Posterior cingulate gyrus (tissue), 11 donors: ENCODE measurements at regions of chr13 and their contacts with region 1.

Region 1: GRCh38 chr13:40992678-40993518 is 26.2 kb downstream of the ELF1 start:
- DNase-seq: no peak

Region 2: GRCh38 chr13:40777166-40777808 is 215.6 kb before region 1 on chr13:
- intact Hi-C with region 1: loop called (anchors 5 kb)
- DNase-seq: no peak

Region 3: DNA sequence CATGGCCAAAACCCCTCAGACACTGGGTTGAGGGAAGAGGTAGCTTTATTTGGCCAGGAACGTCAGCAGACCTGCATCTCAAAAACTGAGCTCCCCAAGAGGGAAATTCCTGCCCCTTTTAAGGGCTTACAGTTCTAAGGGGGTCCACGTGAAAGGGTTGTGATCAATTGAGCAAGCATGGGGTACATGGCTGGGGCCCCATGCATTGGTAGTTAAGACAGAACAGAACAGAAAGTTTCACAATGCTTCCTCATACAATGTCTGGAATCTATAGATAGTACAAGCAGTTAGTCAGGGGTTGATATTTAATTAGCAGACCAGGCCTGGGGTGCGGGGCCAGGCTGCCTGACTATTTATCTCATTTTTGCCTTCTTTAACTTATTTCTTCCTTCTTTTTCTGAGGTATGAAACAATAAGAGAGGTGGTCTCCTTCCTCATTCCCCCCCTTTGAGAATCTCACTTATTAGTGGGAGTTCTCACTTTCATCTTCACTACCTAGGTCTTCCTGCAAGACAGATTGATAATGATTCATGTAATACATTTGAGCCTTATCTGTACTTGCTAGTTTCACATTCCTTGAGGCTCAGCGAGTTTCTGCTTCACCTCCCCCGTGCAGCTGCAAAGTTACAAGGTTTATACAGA is 118.6 kb before region 1 on chr13:
- intact Hi-C with region 1: no loop called
- DNase-seq: no peak